ENCODE measurements at regions of chr1 and their contacts with region 1.

Region 1: DNA sequence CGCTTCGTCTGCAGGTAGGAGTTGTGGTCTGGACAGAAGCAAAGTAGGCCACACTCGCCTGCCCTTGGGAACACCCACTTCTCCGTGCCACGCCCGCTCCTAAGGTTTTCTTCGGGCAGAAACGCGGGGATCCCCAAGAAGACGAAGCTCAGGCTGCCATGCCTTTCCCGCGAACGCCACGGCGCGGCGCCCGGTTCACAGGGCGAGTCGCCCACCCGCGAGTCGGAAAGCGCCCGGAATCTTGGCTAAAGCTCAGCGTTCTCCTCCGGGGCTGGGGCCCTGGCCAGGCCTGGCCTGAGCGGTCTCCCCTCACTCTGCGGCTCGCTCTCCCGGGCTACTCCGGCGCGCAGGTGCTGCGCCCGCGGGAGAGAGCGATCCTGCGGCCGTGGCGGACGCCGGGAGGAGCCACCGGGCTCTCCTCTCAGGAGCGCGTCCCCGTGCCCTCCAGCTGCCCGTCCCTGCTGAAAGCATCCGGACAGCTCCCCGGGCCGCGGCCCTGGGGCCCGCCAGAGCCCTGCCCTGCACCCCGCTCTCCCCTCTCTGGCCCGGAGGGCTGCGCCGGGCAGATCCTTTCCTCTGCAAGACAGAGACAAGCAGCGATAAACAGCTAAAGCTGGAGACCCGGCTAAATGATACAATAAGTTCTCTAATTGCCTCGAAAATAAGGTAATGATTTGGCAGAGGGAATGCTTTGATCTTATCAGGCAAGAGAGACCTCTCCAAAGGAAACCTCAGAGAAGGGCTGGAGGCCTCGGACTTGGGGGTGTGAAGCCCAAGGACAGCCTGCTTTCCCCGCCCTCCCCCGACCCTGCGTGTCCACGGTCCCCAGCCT is 6.7 kb upstream of the WNT2B start:
- DNase-seq: peak; percentile 70
- H3K4me3 Mint-ChIP-seq: peak overlapping the region; percentile 10
- H3K27ac Mint-ChIP-seq: no peak overlapping the region
- H3K4me1 Mint-ChIP-seq: peaks cover 6% of the 10 kb centered on the region
- H3K27me3 Mint-ChIP-seq: peaks cover 51% of the 10 kb centered on the region

Region 2: GRCh38 chr1:112472142-112472541 is 29.9 kb before region 1 on chr1:
- CTCF ChIA-PET with region 1: no interaction called
- POLR2A ChIA-PET with region 1: no interaction called
- intact Hi-C with region 1: no loop called
- DNase-seq: no peak
- H3K4me3 Mint-ChIP-seq: no peak overlapping the region
- H3K27ac Mint-ChIP-seq: no peak overlapping the region
- H3K4me1 Mint-ChIP-seq: no peaks in the 10 kb centered on the region
- H3K27me3 Mint-ChIP-seq: peaks cover 36% of the 10 kb centered on the region

Region 3: GRCh38 chr1:112557385-112557784 is 55.4 kb after region 1 on chr1:
- CTCF ChIA-PET with region 1: no interaction called
- POLR2A ChIA-PET with region 1: no interaction called
- intact Hi-C with region 1: no loop called
- DNase-seq: no peak
- H3K4me3 Mint-ChIP-seq: no peak overlapping the region
- H3K27ac Mint-ChIP-seq: no peak overlapping the region
- H3K4me1 Mint-ChIP-seq: peaks cover 5% of the 10 kb centered on the region
- H3K27me3 Mint-ChIP-seq: no peaks in the 10 kb centered on the region

Region 4: DNA sequence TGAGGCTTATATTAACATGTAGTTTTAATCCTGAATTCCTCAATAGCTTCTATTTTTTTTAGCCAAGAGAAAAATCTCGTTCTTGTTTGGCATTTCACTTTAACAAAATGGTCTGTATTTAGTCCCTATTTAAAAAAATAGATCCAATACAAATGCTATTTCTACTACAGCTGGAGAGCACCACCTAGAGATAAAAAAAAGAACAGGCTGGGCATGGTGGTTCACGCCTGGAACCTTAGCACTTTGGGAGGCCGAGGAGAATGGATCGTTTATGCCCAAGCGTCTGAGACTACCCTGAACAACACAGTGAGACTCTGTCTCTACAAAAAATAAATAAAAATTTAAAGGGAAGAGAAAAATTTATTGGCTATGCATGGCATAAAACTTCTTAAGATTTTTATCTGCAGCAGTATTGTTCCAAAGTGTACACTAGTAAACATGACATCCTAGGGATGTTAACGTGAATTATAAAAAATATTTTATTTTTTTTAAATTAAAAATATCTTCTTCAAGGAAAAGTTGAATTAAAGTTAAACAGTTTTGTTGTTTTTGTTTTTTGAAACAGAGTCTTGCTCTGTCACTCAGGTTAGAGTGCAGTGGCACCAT is 112.5 kb after region 1 on chr1:
- CTCF ChIA-PET with region 1: interaction called, 36 read pairs
- POLR2A ChIA-PET with region 1: interaction called, 9 read pairs
- intact Hi-C with region 1: loop called (anchors 1 kb)
- DNase-seq: peak; percentile 27
- H3K4me3 Mint-ChIP-seq: no peak overlapping the region
- H3K27ac Mint-ChIP-seq: no peak overlapping the region
- H3K4me1 Mint-ChIP-seq: peaks cover 16% of the 10 kb centered on the region
- H3K27me3 Mint-ChIP-seq: no peaks in the 10 kb centered on the region

Region 5: GRCh38 chr1:112674439-112674985 is 172.5 kb after region 1 on chr1 and contains the start of gene MOV10:
- CTCF ChIA-PET with region 1: interaction called, 15 read pairs
- POLR2A ChIA-PET with region 1: no interaction called
- intact Hi-C with region 1: loop called (anchors 10 kb)
- DNase-seq: peak; percentile 73
- H3K4me3 Mint-ChIP-seq: peak within 1 kb of the TSS; percentile 96
- H3K27ac Mint-ChIP-seq: peak within 1 kb of the TSS; percentile 94
- H3K4me1 Mint-ChIP-seq: peaks cover 46% of the 10 kb centered on the region
- H3K27me3 Mint-ChIP-seq: no peaks in the 10 kb centered on the region
- total RNA-seq, gene MOV10: 57.7 to 63.1 TPM